Heart left ventricle (tissue), 16 donors: ENCODE measurements at regions of chr14 and their contacts with region 1.

Region 1: DNA sequence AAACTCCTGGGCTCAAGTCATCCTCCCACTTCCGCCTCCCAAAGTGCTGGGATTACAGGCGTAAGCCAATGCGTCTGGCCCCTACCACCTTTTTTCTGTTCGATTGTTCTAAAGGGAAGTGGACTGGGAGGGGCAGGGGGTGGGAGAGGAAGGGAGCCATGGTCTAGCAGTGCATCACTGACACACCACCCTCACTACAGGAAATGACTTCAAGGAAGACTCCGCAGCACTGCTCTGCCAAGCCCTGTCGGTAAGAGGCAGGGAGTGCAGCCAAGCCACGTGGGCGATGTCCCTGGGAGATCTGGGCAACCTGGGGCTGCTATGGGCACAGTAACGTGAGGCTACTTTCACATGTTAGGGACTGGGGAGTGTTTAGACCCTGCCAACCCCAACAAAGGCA is 18.0 kb downstream of the LRRC74A start:
- DNase-seq: peak; percentile 80 to 87 (median 83)
- ATAC-seq: peak; percentile 91 to 99 (median 98)
- H3K4me3 ChIP-seq: no peak overlapping the region
- H3K27ac ChIP-seq: peak overlapping the region; percentile 61 to 93 (median 86)
- H3K4me1 ChIP-seq: peaks cover 0 to 27% (median 8%) of the 10 kb centered on the region in 12 donors
- H3K27me3 ChIP-seq: peaks cover 0 to 4% (median 0%) of the 10 kb centered on the region in 9 donors
- CTCF ChIP-seq: peak in 9 of 12 donors; percentile 15 to 49 (median 36)
- POLR2A ChIP-seq: no peak

Region 2: DNA sequence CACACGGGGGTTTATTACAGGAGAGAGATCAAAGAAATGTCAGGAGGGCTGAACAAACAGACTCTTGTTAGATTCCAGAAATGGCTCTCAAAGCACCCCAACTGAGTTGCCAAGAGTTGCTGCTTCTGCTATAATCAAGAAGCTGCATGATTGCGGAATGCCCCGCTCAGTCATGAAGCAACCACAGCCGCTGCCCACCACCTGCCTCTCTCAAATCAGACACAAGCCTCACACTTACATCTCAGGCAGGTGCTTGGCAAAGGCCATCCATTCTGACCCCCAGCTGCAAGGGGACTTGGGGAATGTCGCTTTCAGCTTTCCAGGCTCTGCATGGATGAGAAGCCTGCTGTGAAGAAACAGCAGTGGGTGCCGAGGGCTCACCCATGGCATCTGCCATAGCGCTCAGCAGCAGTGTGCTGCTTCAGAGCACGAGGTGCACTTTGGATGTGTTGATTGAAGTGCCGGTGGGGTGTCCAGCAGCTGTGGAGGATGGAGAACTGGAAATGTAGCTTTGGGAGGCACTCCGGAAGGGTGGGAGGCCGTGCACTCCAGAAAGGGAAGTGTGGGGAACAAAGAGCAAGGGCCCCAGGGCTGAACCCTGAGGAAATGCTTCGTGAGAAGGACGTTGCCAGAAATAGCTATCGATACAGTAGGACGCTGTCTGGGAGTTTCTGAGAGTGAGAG is 19.6 kb after region 1 on chr14:
- intact Hi-C with region 1: loop called in 3 of 10 experiments (anchors 1 to 2 kb)
- DNase-seq: peak in 4 of 5 donors; percentile 78 to 84 (median 81)
- ATAC-seq: peak; percentile 80 to 91 (median 84)
- H3K4me3 ChIP-seq: peak overlapping the region in 9 of 12 donors; percentile 20 to 56 (median 46)
- H3K27ac ChIP-seq: peak overlapping the region; percentile 43 to 92 (median 82)
- H3K4me1 ChIP-seq: peaks cover 9 to 53% (median 30%) of the 10 kb centered on the region in 12 donors
- H3K27me3 ChIP-seq: no peaks in the 10 kb centered on the region
- CTCF ChIP-seq: no peak
- POLR2A ChIP-seq: no peak